Breast epithelium (tissue), 4 donors: ENCODE measurements at regions of chr2 and their contacts with region 1.

Region 1: DNA sequence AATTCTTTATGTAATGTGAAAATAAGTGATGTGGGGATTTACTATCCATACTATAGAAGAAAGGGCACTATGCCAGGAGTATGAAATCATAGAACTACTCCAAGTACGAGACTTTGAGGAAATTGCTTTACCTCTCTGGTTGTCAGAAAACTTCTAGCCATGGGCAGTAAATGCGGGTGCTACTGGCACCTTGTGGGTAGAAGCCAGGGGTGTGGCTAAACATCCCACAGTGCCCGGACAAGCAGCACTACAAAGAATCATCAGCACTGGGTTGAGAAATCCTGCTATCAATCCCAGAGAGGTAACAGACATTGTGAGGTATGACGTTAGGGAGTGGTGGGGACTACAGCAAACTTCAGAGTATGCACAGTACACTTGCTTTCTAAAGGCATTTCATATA is 453.5 kb upstream of the TNP1 start:
- DNase-seq: no peak
- H3K4me3 ChIP-seq: no peak overlapping the region
- H3K27ac ChIP-seq: no peak overlapping the region
- H3K4me1 ChIP-seq: no peaks in the 10 kb centered on the region
- H3K27me3 ChIP-seq: no peaks in the 10 kb centered on the region
- CTCF ChIP-seq: no peak
- POLR2A ChIP-seq: no peak

Region 2: GRCh38 chr2:217337771-217338170 is 24.4 kb after region 1 on chr2:
- intact Hi-C with region 1: loop called (anchors 1 kb)
- DNase-seq: no peak
- H3K4me3 ChIP-seq: no peak overlapping the region
- H3K27ac ChIP-seq: no peak overlapping the region
- H3K4me1 ChIP-seq: no peaks in the 10 kb centered on the region
- H3K27me3 ChIP-seq: no peaks in the 10 kb centered on the region
- CTCF ChIP-seq: no peak
- POLR2A ChIP-seq: no peak